ENCODE measurements at regions of chr1 and their contacts with region 1.

Region 1: DNA sequence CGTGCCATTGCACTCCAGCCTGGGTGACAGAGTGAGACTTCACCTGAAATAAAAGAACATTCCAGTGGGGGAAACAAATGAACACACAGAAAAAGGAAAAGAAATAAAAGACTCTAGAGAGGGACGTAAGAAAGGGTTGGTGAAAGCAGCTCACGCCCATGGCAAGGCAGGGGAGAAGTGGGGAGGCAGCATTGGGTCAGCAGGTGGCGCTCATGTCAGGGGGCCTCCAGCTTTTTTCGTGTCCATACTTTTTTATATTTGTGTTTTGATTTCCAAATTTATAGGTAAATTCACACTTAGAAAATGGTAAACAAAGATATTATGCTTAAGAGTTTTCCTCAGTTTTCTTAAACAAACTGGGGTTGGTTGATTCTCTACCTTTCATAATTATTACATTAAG is 45.5 kb downstream of the VPS13D start:
- DNase-seq: peak; percentile 20
- H3K4me3 ChIP-seq: no peak overlapping the region
- H3K27ac ChIP-seq: no peak overlapping the region
- H3K4me1 ChIP-seq: no peaks in the 10 kb centered on the region
- H3K27me3 ChIP-seq: no peaks in the 10 kb centered on the region
- CTCF ChIP-seq: peak; percentile 69 to 73
- POLR2A ChIP-seq: no peak

Region 2: GRCh38 chr1:12113433-12114339 is 161.7 kb before region 1 on chr1:
- CTCF ChIA-PET with region 1: interaction called, 18 read pairs
- POLR2A ChIA-PET with region 1: no interaction called
- dilution Hi-C with region 1: no loop called
- intact Hi-C with region 1: loop called (anchors 2 kb)
- DNase-seq: no peak
- H3K4me3 ChIP-seq: no peak overlapping the region
- H3K27ac ChIP-seq: no peak overlapping the region
- H3K4me1 ChIP-seq: no peaks in the 10 kb centered on the region
- H3K27me3 ChIP-seq: peaks cover 0 to 3% of the 10 kb centered on the region in 2 experiments
- CTCF ChIP-seq: no peak
- POLR2A ChIP-seq: no peak

Region 3: GRCh38 chr1:12215118-12215961 is 60.0 kb before region 1 on chr1:
- CTCF ChIA-PET with region 1: no interaction called
- POLR2A ChIA-PET with region 1: no interaction called
- dilution Hi-C with region 1: no loop called
- intact Hi-C with region 1: loop called (anchors 10 kb)
- DNase-seq: no peak
- H3K4me3 ChIP-seq: no peak overlapping the region
- H3K27ac ChIP-seq: no peak overlapping the region
- H3K4me1 ChIP-seq: no peaks in the 10 kb centered on the region
- H3K27me3 ChIP-seq: peaks cover 0 to 12% of the 10 kb centered on the region in 2 experiments
- CTCF ChIP-seq: no peak
- POLR2A ChIP-seq: no peak

Region 4: GRCh38 chr1:12229835-12230548 is 45.4 kb before region 1 on chr1 and contains the start of gene VPS13D:
- CTCF ChIA-PET with region 1: no interaction called
- POLR2A ChIA-PET with region 1: no interaction called
- dilution Hi-C with region 1: no loop called
- intact Hi-C with region 1: no loop called
- DNase-seq: peak; percentile 59
- H3K4me3 ChIP-seq: peak within 1 kb of the TSS; percentile 59 to 75 (median 73)
- H3K27ac ChIP-seq: peak within 1 kb of the TSS; percentile 20
- H3K4me1 ChIP-seq: peaks cover 6% of the 10 kb centered on the region
- H3K27me3 ChIP-seq: no peaks in the 10 kb centered on the region
- CTCF ChIP-seq: peak; percentile 91 to 99
- POLR2A ChIP-seq: peak; percentile 68
- total RNA-seq, gene VPS13D: 41.7 and 48.5 TPM in 2 replicates

Region 5: GRCh38 chr1:12287869-12288268 is 12.5 kb after region 1 on chr1:
- CTCF ChIA-PET with region 1: interaction called, 13 read pairs
- POLR2A ChIA-PET with region 1: no interaction called
- dilution Hi-C with region 1: no loop called
- intact Hi-C with region 1: no loop called
- DNase-seq: no peak
- H3K4me3 ChIP-seq: no peak overlapping the region
- H3K27ac ChIP-seq: no peak overlapping the region
- H3K4me1 ChIP-seq: no peaks in the 10 kb centered on the region
- H3K27me3 ChIP-seq: no peaks in the 10 kb centered on the region
- CTCF ChIP-seq: no peak
- POLR2A ChIP-seq: no peak

Measured in endothelial cell of umbilical vein (primary cell).